MCF 10A (cell line): ENCODE measurements at regions of chr10 and their contacts with region 1.

Region 1: DNA sequence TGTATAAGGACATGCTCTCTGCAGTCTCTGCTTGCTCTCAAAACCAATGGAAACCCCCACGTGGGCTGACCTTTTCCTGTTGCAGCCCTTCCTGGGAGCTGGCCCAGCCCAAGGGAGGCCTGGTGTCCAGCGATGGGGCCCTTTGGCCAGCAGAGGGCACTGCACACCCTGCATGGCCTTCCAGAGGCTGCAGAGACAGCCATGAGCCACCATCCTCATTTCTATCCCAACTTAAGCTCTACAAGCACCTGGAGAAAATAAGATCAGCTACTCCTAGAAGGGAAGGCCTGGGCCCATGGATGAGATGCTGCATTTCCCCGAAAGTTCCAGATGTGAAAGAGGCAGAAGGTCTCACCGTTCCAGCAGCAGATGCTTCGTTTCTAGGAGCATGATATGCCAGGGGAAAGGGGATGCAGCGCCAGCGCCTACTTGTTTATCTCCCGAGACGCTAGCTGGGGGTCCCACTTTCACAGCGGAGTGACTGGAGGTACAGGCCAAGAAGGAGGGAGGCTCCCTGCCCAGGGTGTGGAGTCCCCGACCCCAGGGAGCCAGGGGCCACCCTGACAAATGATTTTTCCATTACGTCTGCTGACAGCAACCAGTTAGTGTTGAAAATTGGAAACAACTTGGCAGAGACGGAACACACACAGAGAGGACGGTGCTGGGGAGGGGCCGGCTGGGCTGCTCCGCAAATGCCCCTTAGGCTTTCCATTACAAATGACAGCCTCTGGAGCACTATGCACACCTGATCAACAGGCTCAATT is 106.4 kb downstream of the ZRANB1 start:
- DNase-seq: peak; percentile 86
- H3K4me3 Mint-ChIP-seq: no peak overlapping the region
- H3K27ac Mint-ChIP-seq: peak overlapping the region; percentile 22
- H3K4me1 Mint-ChIP-seq: peaks cover 28% of the 10 kb centered on the region
- H3K27me3 Mint-ChIP-seq: no peaks in the 10 kb centered on the region
- CTCF ChIP-seq: peak; percentile 90

Region 2: DNA sequence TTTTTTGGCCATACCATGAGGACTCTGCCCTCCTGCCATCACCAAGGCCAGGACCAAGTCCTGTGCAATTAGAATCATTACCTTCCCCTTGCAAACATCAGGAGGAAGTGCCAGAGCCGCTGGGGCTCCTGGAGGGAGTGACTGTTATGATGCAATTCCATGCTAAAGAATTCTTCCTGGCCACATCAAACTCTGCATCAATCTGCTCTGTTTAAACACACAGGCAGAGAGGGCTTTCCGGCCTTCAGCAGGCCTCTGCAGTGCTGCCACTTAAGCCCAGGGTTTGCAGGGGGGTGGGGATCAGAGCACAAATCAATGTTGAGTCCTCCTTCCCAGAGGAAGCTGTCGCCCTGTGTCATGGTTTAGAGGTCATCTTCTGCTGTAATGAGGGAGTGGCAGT is 53.9 kb after region 1 on chr10:
- CTCF ChIA-PET with region 1: interaction called, 13 read pairs
- POLR2A ChIA-PET with region 1: no interaction called
- intact Hi-C with region 1: no loop called
- DNase-seq: peak; percentile 62
- H3K4me3 Mint-ChIP-seq: no peak overlapping the region
- H3K27ac Mint-ChIP-seq: no peak overlapping the region
- H3K4me1 Mint-ChIP-seq: peaks cover 29% of the 10 kb centered on the region
- H3K27me3 Mint-ChIP-seq: no peaks in the 10 kb centered on the region
- CTCF ChIP-seq: no peak

Region 3: GRCh38 chr10:125123476-125124114 is 75.3 kb after region 1 on chr10:
- CTCF ChIA-PET with region 1: interaction called, 13 read pairs
- POLR2A ChIA-PET with region 1: interaction called, 8 read pairs
- intact Hi-C with region 1: no loop called
- DNase-seq: peak; percentile 99
- H3K4me3 Mint-ChIP-seq: peak overlapping the region; percentile 65
- H3K27ac Mint-ChIP-seq: peak overlapping the region; percentile 93
- H3K4me1 Mint-ChIP-seq: peaks cover 76% of the 10 kb centered on the region
- H3K27me3 Mint-ChIP-seq: no peaks in the 10 kb centered on the region
- CTCF ChIP-seq: no peak

Region 4: GRCh38 chr10:125152450-125153368 is 104.4 kb after region 1 on chr10:
- CTCF ChIA-PET with region 1: interaction called, 23 read pairs
- POLR2A ChIA-PET with region 1: interaction called, 7 read pairs
- intact Hi-C with region 1: no loop called
- DNase-seq: peak; percentile 54
- H3K4me3 Mint-ChIP-seq: peak overlapping the region; percentile 82
- H3K27ac Mint-ChIP-seq: peak overlapping the region; percentile 92
- H3K4me1 Mint-ChIP-seq: peaks cover 76% of the 10 kb centered on the region
- H3K27me3 Mint-ChIP-seq: no peaks in the 10 kb centered on the region
- CTCF ChIP-seq: no peak

Region 5: GRCh38 chr10:125222515-125223308 is 174.4 kb after region 1 on chr10:
- CTCF ChIA-PET with region 1: no interaction called
- POLR2A ChIA-PET with region 1: no interaction called
- intact Hi-C with region 1: no loop called
- DNase-seq: no peak
- H3K4me3 Mint-ChIP-seq: no peak overlapping the region
- H3K27ac Mint-ChIP-seq: no peak overlapping the region
- H3K4me1 Mint-ChIP-seq: peaks cover 13% of the 10 kb centered on the region
- H3K27me3 Mint-ChIP-seq: no peaks in the 10 kb centered on the region
- CTCF ChIP-seq: no peak

Region 6: GRCh38 chr10:125343118-125343925 is 295.0 kb after region 1 on chr10:
- CTCF ChIA-PET with region 1: interaction called, 7 read pairs
- POLR2A ChIA-PET with region 1: no interaction called
- intact Hi-C with region 1: loop called (anchors 10 kb)
- DNase-seq: peak; percentile 45
- H3K4me3 Mint-ChIP-seq: no peak overlapping the region
- H3K27ac Mint-ChIP-seq: no peak overlapping the region
- H3K4me1 Mint-ChIP-seq: peaks cover 8% of the 10 kb centered on the region
- H3K27me3 Mint-ChIP-seq: no peaks in the 10 kb centered on the region
- CTCF ChIP-seq: peak; percentile 44

Region 7: GRCh38 chr10:125700355-125700911 is 652.1 kb after region 1 on chr10:
- CTCF ChIA-PET with region 1: interaction called, 6 read pairs
- POLR2A ChIA-PET with region 1: no interaction called
- intact Hi-C with region 1: loop called (anchors 5 kb)
- DNase-seq: peak; percentile 40
- H3K4me3 Mint-ChIP-seq: no peak overlapping the region
- H3K27ac Mint-ChIP-seq: no peak overlapping the region
- H3K4me1 Mint-ChIP-seq: no peaks in the 10 kb centered on the region
- H3K27me3 Mint-ChIP-seq: no peaks in the 10 kb centered on the region
- CTCF ChIP-seq: peak; percentile 33